ENCODE measurements at regions of chr11 and their contacts with region 1.

Region 1: GRCh38 chr11:134207538-134208239 is 16.1 kb downstream of the NCAPD3 start:
- DNase-seq: peak in 1 of 4 experiments; percentile 55
- ATAC-seq: peak; percentile 77
- H3K4me3 ChIP-seq: no peak overlapping the region
- H3K27ac ChIP-seq: no peak overlapping the region
- H3K4me1 ChIP-seq: no peaks in the 10 kb centered on the region
- H3K27me3 ChIP-seq: no peaks in the 10 kb centered on the region
- CTCF ChIP-seq: peak; percentile 42 to 68 (median 45); a peak in 5 of 6 replicates
- EP300 ChIP-seq: no peak
- POLR2A ChIP-seq: no peak
- RAD21 ChIP-seq: peak; percentile 35 to 60

Region 2: GRCh38 chr11:133995066-133995465 is 212.6 kb before region 1 on chr11:
- CTCF ChIA-PET with region 1: no interaction called
- POLR2A ChIA-PET with region 1: no interaction called
- in situ Hi-C with region 1: no loop called
- intact Hi-C with region 1: no loop called
- DNase-seq: no peak
- ATAC-seq: no peak
- H3K4me3 ChIP-seq: no peak overlapping the region
- H3K27ac ChIP-seq: no peak overlapping the region
- H3K4me1 ChIP-seq: no peaks in the 10 kb centered on the region; a peak in 1 of 5 replicates
- H3K27me3 ChIP-seq: peaks cover 2 to 44% of the 10 kb centered on the region in 2 experiments; a peak in 3 of 5 replicates
- CTCF ChIP-seq: no peak
- EP300 ChIP-seq: no peak
- POLR2A ChIP-seq: no peak
- RAD21 ChIP-seq: no peak

Region 3: GRCh38 chr11:134244655-134245054 is 37.0 kb after region 1 on chr11:
- CTCF ChIA-PET with region 1: no interaction called
- POLR2A ChIA-PET with region 1: no interaction called
- in situ Hi-C with region 1: no loop called
- intact Hi-C with region 1: loop called (anchors 2 kb)
- DNase-seq: peak in 2 of 4 experiments; percentile 31 to 38
- ATAC-seq: peak; percentile 80
- H3K4me3 ChIP-seq: no peak overlapping the region
- H3K27ac ChIP-seq: no peak overlapping the region
- H3K4me1 ChIP-seq: peaks cover 0 to 9% of the 10 kb centered on the region in 2 experiments; a peak in 1 of 5 replicates
- H3K27me3 ChIP-seq: no peaks in the 10 kb centered on the region
- CTCF ChIP-seq: peak; percentile 54 to 76 (median 58)
- EP300 ChIP-seq: no peak
- POLR2A ChIP-seq: no peak
- RAD21 ChIP-seq: peak in 1 of 2 experiments; percentile 44; a peak in 2 of 4 replicates

Region 4: GRCh38 chr11:134253188-134253993 is 45.7 kb after region 1 on chr11 and contains the starts of genes ACAD8 and THYN1:
- CTCF ChIA-PET with region 1: no interaction called
- POLR2A ChIA-PET with region 1: no interaction called
- in situ Hi-C with region 1: no loop called
- intact Hi-C with region 1: loop called (anchors 2 kb)
- DNase-seq: peak; percentile 97 to 98 (median 97)
- ATAC-seq: peak; percentile 99
- H3K4me3 ChIP-seq: peak within 1 kb of the TSS; percentile 92
- H3K27ac ChIP-seq: peak within 1 kb of the TSS; percentile 54
- H3K4me1 ChIP-seq: peaks cover 3 to 17% of the 10 kb centered on the region in 2 experiments; a peak in 4 of 5 replicates
- H3K27me3 ChIP-seq: no peaks in the 10 kb centered on the region
- CTCF ChIP-seq: peak in 2 of 3 experiments; percentile 1 to 8; a peak in 1 of 6 replicates
- EP300 ChIP-seq: no peak
- POLR2A ChIP-seq: peak; percentile 74
- RAD21 ChIP-seq: no peak; a peak in 1 of 4 replicates
- polyA plus RNA-seq, gene ACAD8: 6.5 to 11.5 TPM
- polyA plus RNA-seq, gene THYN1: 229 to 279 TPM

Measured in K562 (cell line).